PC-9 (cell line): ENCODE measurements at regions of chr7 and their contacts with region 1.

Region 1: GRCh38 chr7:31448649-31449048 is 65.2 kb upstream of the ITPRID1 start:
- DNase-seq: no peak
- H3K4me3 ChIP-seq: no peak overlapping the region
- H3K27ac ChIP-seq: no peak overlapping the region
- H3K4me1 ChIP-seq: no peaks in the 10 kb centered on the region
- H3K27me3 ChIP-seq: 0 out of 2 replicates have a peak, but pooled peaks cover 8% of the 10 kb centered on the region
- CTCF ChIP-seq: no peak

Region 2: GRCh38 chr7:32502728-32503127 is 1054.1 kb after region 1 on chr7:
- CTCF ChIA-PET with region 1: interaction called, 10 read pairs
- POLR2A ChIA-PET with region 1: no interaction called
- intact Hi-C with region 1: no loop called
- DNase-seq: no peak
- H3K4me3 ChIP-seq: no peak overlapping the region
- H3K27ac ChIP-seq: no peak overlapping the region
- H3K4me1 ChIP-seq: peaks cover 29% of the 10 kb centered on the region
- H3K27me3 ChIP-seq: no peaks in the 10 kb centered on the region
- CTCF ChIP-seq: no peak